ENCODE measurements at regions of chr13 and their contacts with region 1.

Region 1: DNA sequence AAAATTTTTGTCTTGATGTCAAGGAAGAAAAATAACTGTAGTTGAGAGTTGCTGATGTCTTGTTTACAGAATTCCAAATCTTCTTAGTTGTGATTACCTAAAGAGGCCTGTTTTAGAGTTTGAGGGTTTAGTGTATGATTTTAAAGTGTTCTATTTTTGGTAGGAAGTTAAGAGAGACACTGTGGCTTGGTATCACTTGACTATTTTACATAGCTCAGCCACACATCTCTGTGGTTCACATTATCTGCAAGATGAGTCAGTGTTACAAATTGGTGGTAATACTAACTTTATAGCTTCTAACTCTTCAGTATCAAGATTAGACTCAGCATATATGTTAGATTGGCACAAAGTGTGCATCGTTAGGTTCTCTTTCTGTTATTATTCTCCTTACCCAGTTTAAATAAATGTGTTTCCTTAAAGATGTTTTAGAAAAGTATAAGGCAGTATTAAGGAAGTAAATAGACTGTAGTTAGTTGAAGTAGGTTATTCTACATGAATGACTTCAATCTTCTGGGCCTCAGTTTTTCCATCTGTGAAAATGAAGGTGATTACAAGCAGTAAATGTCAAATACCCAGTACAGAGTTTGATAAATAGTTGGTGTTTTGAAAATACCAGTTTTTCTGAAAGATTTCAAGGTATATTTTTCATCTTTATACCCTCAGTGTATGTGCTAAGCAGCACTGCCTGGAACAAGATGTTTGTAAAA is 33.4 kb downstream of the COG6 start:
- DNase-seq: no peak
- H3K4me3 ChIP-seq: no peak overlapping the region
- H3K27ac ChIP-seq: no peak overlapping the region
- H3K4me1 ChIP-seq: no peaks in the 10 kb centered on the region
- H3K27me3 ChIP-seq: no peaks in the 10 kb centered on the region
- CTCF ChIP-seq: no peak

Region 2: GRCh38 chr13:38349390-38350113 is 1339.3 kb before region 1 on chr13 and contains the start of gene UFM1:
- intact Hi-C with region 1: no loop called
- DNase-seq: peak; percentile 90 to 94
- H3K4me3 ChIP-seq: peak within 1 kb of the TSS; percentile 67 to 90
- H3K27ac ChIP-seq: peak within 1 kb of the TSS; percentile 82 to 93
- H3K4me1 ChIP-seq: peaks cover 0 to 24% (median 15%) of the 10 kb centered on the region in 4 donors
- H3K27me3 ChIP-seq: no peaks in the 10 kb centered on the region
- CTCF ChIP-seq: no peak

Region 3: GRCh38 chr13:40688781-40689180 is 999.9 kb after region 1 on chr13:
- intact Hi-C with region 1: loop called (anchors 2 kb)
- DNase-seq: no peak
- H3K4me3 ChIP-seq: no peak overlapping the region
- H3K27ac ChIP-seq: no peak overlapping the region
- H3K4me1 ChIP-seq: no peaks in the 10 kb centered on the region
- H3K27me3 ChIP-seq: no peaks in the 10 kb centered on the region
- CTCF ChIP-seq: no peak

Measured in tibial artery (tissue), 4 donors.